ENCODE measurements at regions of chr1 and their contacts with region 1.

Region 1: DNA sequence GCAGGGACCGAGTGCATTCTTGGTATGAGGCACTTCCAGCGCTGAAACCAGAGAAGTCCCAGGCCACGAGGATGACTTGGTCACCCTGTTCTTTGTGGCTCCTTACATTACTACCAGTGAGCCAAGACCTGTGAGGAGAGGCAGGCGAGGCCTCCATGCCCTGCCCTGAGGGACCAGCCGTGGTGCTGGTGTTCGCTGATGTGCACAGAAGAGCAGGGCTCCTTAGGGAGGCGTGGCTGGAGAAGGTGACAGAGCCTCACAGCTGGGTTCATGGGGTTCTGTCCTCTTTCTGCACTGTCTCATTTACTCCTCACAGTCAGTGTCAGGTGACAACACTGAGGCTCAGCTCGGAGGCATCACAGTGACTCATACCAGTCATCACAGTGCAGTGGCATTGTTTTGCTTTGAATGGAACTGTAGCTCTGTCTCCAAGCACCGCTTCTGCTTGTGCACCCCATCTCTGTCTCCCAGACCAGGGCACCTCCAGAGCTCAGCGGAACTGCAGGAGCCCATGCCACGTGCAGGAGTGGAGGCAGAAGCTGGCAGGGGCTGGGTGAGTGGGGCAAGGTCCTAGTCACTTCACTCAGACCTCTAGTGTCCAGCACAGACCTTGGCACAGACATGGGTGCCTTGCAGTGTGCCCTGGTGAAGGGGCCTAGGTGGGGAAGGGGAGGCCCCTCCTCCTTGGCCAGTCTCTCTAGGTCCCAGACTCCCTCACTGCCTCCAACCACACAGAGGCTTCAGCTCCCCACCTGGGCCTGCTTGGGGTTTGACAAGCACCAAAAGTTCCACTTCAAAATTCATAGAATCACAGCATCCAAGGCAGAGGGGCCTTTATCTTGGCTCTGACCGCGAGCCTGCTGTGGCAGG is 310.9 kb downstream of the MATN1 start:
- DNase-seq: no peak
- ATAC-seq: no peak
- H3K4me3 ChIP-seq: no peak overlapping the region
- H3K27ac ChIP-seq: no peak overlapping the region
- H3K4me1 ChIP-seq: no peaks in the 10 kb centered on the region
- H3K27me3 ChIP-seq: peaks cover 0 to 67% (median 35%) of the 10 kb centered on the region in 7 donors
- CTCF ChIP-seq: no peak

Region 2: DNA sequence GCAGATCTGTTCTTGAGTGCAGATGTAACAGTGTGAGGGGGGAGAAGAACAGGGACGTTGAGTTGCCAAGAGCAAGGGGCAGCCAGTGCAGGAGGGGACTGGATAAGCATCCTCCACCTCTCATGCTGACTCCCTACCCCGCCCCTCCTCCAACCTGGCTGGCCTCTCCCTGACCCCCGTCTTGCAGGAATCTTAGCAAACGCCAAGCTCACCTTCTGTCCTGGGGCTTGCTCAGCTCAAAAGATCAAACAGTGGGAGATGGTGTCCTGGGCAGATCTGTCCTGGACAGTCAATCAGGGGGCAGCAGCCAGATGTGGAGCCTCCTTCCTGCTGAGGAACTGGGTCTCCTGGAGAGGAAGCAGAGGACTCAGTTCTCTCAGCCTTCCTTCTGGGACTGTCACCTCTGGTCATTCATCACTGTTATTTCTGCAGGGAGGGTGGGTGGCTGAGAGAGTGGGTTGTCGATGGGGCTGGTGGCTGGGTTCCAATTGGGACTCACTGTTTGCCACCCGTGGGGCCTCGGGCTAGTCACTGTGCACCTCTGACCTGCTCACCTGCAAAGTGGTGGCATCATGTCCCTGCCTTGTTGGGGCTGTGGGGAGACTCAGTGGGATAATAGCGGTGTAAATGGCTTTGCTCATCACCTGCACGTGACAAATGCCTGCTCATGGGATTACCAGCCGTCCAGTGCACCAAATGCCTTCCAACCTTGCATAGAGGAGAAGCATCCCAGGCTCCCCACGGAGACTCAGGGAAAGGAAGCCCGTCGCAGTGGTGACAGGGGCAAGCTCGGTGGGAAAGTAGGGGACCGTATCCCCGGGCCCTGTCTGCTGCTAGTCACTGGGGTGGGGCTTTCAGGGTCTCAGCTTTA is 1021.8 kb before region 1 on chr1:
- intact Hi-C with region 1: loop called in 1 of 10 experiments (anchors 5 kb)
- DNase-seq: no peak
- ATAC-seq: no peak
- H3K4me3 ChIP-seq: no peak overlapping the region
- H3K27ac ChIP-seq: no peak overlapping the region
- H3K4me1 ChIP-seq: peaks cover 0 to 5% (median 0%) of the 10 kb centered on the region in 9 donors
- H3K27me3 ChIP-seq: peaks cover 4 to 68% (median 36%) of the 10 kb centered on the region in 7 donors
- CTCF ChIP-seq: no peak

Region 3: DNA sequence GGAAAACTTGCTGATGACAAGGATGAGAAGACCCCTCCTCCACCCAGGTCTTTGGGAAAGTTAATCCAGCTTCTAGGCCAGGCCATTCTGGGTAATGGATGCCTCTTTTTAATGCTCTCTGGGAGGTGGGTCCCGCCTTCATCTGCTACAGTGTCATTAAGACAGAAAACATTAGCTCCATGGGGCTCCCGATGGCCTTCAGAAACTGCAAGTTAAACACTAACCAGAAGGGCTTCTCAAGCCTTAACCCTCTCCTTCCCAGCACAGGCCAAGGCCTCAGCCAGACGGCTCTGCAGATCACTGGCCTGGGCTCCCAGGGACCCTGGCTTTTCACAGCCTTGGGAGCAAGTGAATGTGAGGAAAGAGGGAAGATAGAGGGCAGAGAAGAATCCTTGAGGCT is 54.0 kb before region 1 on chr1:
- intact Hi-C with region 1: no loop called
- DNase-seq: no peak
- ATAC-seq: no peak
- H3K4me3 ChIP-seq: no peak overlapping the region
- H3K27ac ChIP-seq: no peak overlapping the region
- H3K4me1 ChIP-seq: no peaks in the 10 kb centered on the region
- H3K27me3 ChIP-seq: peaks cover 4 to 50% (median 29%) of the 10 kb centered on the region in 7 donors
- CTCF ChIP-seq: no peak

Region 4: DNA sequence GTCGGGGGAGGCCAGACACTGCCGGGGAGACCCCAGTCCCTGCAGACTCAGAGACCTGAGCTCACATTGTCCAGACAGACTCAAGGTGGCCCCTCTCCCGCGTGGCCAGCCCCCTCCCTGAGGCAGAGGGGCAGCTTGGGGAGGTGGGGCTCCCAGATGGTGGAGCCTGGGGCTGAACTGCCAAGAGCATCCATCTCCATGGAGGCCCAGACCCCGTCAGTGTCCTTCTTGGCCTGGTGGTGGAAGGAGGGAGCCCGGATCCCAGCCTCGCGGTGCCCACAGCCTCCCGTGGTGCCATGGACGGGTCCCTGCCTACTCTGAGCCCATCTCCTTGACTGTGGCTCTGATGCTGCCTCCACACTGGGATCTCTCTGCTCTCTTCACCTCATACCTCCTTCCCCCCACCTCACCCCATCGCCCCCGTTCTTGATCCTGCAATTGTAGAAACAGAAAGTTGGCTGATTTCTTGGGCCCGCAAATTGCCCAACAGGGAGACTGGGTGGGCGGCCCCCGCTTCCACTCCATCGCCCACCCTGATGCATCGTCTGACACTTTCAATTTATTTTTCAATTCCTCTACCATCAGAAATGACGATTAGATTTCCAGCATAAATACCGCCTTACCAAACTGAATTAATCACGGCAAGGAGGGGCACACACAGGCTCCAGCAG is 37.9 kb before region 1 on chr1:
- intact Hi-C with region 1: loop called in 1 of 10 experiments (anchors 1 kb)
- DNase-seq: no peak
- ATAC-seq: no peak
- H3K4me3 ChIP-seq: no peak overlapping the region
- H3K27ac ChIP-seq: no peak overlapping the region
- H3K4me1 ChIP-seq: no peaks in the 10 kb centered on the region
- H3K27me3 ChIP-seq: peaks cover 0 to 54% (median 29%) of the 10 kb centered on the region in 7 donors
- CTCF ChIP-seq: no peak

Region 5: GRCh38 chr1:30550365-30551220 is 138.1 kb after region 1 on chr1:
- intact Hi-C with region 1: no loop called
- DNase-seq: no peak
- ATAC-seq: no peak
- H3K4me3 ChIP-seq: no peak overlapping the region
- H3K27ac ChIP-seq: no peak overlapping the region
- H3K4me1 ChIP-seq: no peaks in the 10 kb centered on the region
- H3K27me3 ChIP-seq: peaks cover 0 to 17% (median 0%) of the 10 kb centered on the region in 7 donors
- CTCF ChIP-seq: no peak

Region 6: DNA sequence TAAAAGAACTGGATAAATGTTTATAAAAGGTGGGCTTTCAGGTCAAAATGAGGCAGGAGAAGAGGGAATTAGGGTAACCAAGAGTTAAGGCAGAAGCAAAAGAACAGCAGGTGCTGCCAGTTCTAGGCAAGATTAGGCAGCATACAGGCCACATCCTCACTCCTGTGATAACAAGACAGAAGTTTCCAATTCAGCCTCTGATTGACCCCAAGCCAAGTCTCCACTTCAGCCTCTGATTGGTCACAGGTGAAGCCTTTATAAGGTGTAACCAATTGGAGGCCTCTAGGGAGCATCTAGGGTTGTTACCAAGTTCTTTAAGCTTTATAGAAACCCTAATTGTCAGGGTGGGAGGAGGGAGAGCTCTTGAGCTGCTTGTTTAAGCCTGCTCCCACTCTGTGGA is 150.1 kb after region 1 on chr1:
- intact Hi-C with region 1: no loop called
- DNase-seq: no peak
- ATAC-seq: peak in 2 of 8 donors; percentile 69 to 81
- H3K4me3 ChIP-seq: no peak overlapping the region
- H3K27ac ChIP-seq: no peak overlapping the region
- H3K4me1 ChIP-seq: no peaks in the 10 kb centered on the region
- H3K27me3 ChIP-seq: peaks cover 0 to 3% (median 0%) of the 10 kb centered on the region in 7 donors
- CTCF ChIP-seq: no peak